Activated T-helper 1 cell treated with anti-CD3 and anti-CD28 coated beads, Interleukin-12 subunit alpha, Interleukin-12 subunit beta, Interleukin-2, Interleukin-4 antibody, amounts not matched to agents 30 ng/mL and 10 ng/mL and 1 ng/mL, durations not matched to agents 14 hours and 24 hours and 36 hours (primary cell): ENCODE measurements at regions of chr12 and their contacts with region 1.

Region 1: GRCh38 chr12:53451661-53452158 is at the start of gene PCBP2:
- DNase-seq: peak; percentile 97
- H3K4me3 Mint-ChIP-seq: peak within 1 kb of the TSS; percentile 97
- H3K27ac Mint-ChIP-seq: peak within 1 kb of the TSS; percentile 99
- H3K4me1 Mint-ChIP-seq: peaks cover 29% of the 10 kb centered on the region
- H3K27me3 Mint-ChIP-seq: no peaks in the 10 kb centered on the region
- total RNA-seq, gene PCBP2: 865 and 896 TPM in 2 replicates

Region 2: DNA sequence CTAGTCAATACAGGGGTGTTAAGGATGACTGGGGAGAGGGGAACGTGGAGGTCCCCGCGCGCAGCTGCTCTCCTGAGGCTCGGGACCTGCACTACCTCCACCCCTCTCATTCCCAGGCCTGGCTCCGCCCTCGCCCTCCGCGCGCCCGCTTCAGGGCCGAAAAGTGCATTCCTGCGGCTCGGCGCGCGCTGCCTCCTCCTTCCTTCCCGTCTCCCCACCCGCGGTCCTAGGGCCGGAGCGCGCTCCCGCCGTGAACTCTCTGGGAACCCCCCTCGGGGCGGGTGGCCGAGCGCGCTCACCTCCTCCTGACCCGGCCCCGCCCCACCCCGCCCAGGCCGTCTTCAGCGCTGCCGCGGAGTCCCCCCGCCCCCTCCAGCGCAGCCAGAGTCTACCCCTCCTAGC is 230.9 kb before region 1 on chr12:
- intact Hi-C with region 1: loop called (anchors 5 kb)
- DNase-seq: peak; percentile 83
- H3K4me3 Mint-ChIP-seq: peak overlapping the region; percentile 94
- H3K27ac Mint-ChIP-seq: peak overlapping the region; percentile 98
- H3K4me1 Mint-ChIP-seq: peaks cover 83% of the 10 kb centered on the region
- H3K27me3 Mint-ChIP-seq: peaks cover 2% of the 10 kb centered on the region

Region 3: DNA sequence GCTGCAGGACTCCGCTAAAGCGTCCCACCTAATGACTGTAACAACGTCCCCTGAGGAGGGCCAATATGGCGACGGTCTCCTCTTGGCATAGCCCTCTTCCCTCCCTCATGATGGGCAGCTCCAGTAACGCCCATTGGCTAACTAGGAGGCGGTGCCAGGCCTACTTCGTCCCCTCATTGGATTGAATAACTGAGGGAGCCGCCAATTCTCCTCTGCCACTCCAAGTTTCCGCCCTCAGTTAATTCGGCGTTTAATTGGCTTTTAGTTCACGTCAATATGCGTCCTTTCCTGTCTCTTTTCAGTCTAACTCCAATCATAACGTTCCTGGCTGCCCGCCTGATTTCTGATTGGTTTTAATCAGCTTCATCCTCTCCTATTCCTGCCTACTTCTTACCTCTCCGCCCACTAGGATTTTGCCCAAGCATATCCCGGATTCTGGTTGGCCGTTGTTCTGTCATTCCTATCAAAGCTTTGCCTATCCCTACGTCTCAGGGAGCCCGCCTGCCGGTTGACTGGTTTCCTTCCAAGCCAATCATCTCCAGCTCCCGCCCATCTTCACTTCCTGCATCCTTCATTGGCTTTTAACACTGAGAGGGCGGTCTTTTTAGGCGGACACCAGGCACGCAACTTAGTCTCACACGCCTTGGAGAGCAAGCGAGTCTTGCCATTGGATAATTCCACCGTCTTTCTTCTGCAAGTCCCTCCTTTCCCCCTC is 72.2 kb before region 1 on chr12:
- intact Hi-C with region 1: loop called (anchors 1 kb)
- DNase-seq: peak; percentile 99
- H3K4me3 Mint-ChIP-seq: no peak overlapping the region
- H3K27ac Mint-ChIP-seq: no peak overlapping the region
- H3K4me1 Mint-ChIP-seq: peaks cover 37% of the 10 kb centered on the region
- H3K27me3 Mint-ChIP-seq: no peaks in the 10 kb centered on the region

Region 4: GRCh38 chr12:53492830-53493611 is 41.3 kb after region 1 on chr12:
- intact Hi-C with region 1: loop called (anchors 2 kb)
- DNase-seq: peak; percentile 86
- H3K4me3 Mint-ChIP-seq: peak overlapping the region; percentile 86
- H3K27ac Mint-ChIP-seq: peak overlapping the region; percentile 41
- H3K4me1 Mint-ChIP-seq: peaks cover 37% of the 10 kb centered on the region
- H3K27me3 Mint-ChIP-seq: no peaks in the 10 kb centered on the region

Region 5: GRCh38 chr12:53625946-53626701 is 174.4 kb after region 1 on chr12 and contains the start of gene ATF7:
- intact Hi-C with region 1: loop called (anchors 2 kb)
- DNase-seq: peak; percentile 98
- H3K4me3 Mint-ChIP-seq: peak within 1 kb of the TSS; percentile 99
- H3K27ac Mint-ChIP-seq: peak within 1 kb of the TSS; percentile 89
- H3K4me1 Mint-ChIP-seq: peaks cover 36% of the 10 kb centered on the region
- H3K27me3 Mint-ChIP-seq: no peaks in the 10 kb centered on the region
- total RNA-seq, gene ATF7: 21.5 and 25.9 TPM in 2 replicates